ENCODE measurements at regions of chr12 and their contacts with region 1.

Region 1: GRCh38 chr12:100234598-100235304 is 32.1 kb downstream of the DEPDC4 start:
- DNase-seq: peak; percentile 29
- ATAC-seq: peak; percentile 82
- H3K4me3 ChIP-seq: no peak overlapping the region
- H3K27ac ChIP-seq: no peak overlapping the region
- H3K4me1 ChIP-seq: peaks cover 6 to 7% of the 10 kb centered on the region in 2 experiments; a peak in 3 of 4 replicates
- H3K27me3 ChIP-seq: no peaks in the 10 kb centered on the region
- CTCF ChIP-seq: peak; percentile 66 to 77 (median 73); a peak in 5 of 6 replicates
- POLR2A ChIP-seq: no peak
- RAD21 ChIP-seq: peak; percentile 80

Region 2: GRCh38 chr12:100145643-100146042 is 89.1 kb before region 1 on chr12:
- CTCF ChIA-PET with region 1: no interaction called
- POLR2A ChIA-PET with region 1: no interaction called
- RAD21 ChIA-PET with region 1: no interaction called
- intact Hi-C with region 1: no loop called
- DNase-seq: no peak
- ATAC-seq: no peak
- H3K4me3 ChIP-seq: no peak overlapping the region
- H3K27ac ChIP-seq: no peak overlapping the region
- H3K4me1 ChIP-seq: peaks cover 4 to 19% of the 10 kb centered on the region in 2 experiments; a peak in 3 of 4 replicates
- H3K27me3 ChIP-seq: no peaks in the 10 kb centered on the region
- CTCF ChIP-seq: no peak
- POLR2A ChIP-seq: no peak
- RAD21 ChIP-seq: no peak

Region 3: DNA sequence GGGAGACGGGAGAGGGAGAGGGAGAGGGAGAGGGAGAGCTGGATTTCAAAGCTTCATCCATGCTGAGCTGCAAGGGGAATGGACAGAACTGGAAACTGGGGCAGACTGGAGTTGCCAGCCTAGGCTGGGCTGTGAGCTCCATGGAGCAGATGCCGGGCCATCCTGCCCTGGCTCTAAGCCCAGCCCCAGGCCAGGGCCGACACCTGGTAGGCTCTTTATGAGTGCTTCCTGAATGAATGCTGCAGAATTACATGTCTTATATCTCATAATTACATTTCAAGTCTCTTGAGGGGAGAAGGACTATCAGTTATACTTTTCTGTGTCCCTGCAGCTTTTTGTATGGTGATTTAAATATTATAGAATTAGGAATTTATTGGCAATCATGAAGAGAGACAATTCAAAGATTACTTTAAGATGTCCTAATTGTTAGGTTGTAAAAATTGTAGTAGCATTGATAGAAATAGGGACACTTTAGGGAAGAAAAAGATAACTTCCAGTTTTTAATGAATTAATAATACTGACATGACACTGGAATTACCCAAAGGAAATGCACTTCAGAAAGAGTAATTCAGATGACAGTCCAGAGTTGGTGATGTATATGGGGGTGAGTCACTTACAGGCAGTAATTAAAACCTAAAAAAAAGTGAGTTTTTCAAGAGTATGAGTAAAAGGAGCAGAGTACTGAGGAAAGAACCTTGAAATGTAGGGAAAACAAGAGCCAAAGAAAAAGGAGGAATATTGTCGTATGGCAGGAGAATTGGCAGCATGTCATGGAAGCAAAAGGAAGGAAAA is 61.2 kb after region 1 on chr12:
- CTCF ChIA-PET with region 1: no interaction called
- POLR2A ChIA-PET with region 1: no interaction called
- RAD21 ChIA-PET with region 1: no interaction called
- intact Hi-C with region 1: no loop called
- DNase-seq: no peak
- ATAC-seq: no peak
- H3K4me3 ChIP-seq: no peak overlapping the region
- H3K27ac ChIP-seq: no peak overlapping the region
- H3K4me1 ChIP-seq: no peaks in the 10 kb centered on the region
- H3K27me3 ChIP-seq: no peaks in the 10 kb centered on the region
- CTCF ChIP-seq: no peak
- POLR2A ChIP-seq: no peak
- RAD21 ChIP-seq: no peak

Region 4: GRCh38 chr12:100348657-100349454 is 114.1 kb after region 1 on chr12:
- CTCF ChIA-PET with region 1: interaction called, 10 read pairs
- POLR2A ChIA-PET with region 1: no interaction called
- RAD21 ChIA-PET with region 1: no interaction called
- intact Hi-C with region 1: no loop called
- DNase-seq: peak; percentile 33
- ATAC-seq: peak; percentile 76
- H3K4me3 ChIP-seq: no peak overlapping the region
- H3K27ac ChIP-seq: no peak overlapping the region
- H3K4me1 ChIP-seq: no peaks in the 10 kb centered on the region
- H3K27me3 ChIP-seq: peaks cover 3% of the 10 kb centered on the region; the same call in 1 of the 2 replicates
- CTCF ChIP-seq: peak; percentile 16 to 80 (median 57); a peak in 4 of 6 replicates
- POLR2A ChIP-seq: no peak
- RAD21 ChIP-seq: peak; percentile 81

Region 5: DNA sequence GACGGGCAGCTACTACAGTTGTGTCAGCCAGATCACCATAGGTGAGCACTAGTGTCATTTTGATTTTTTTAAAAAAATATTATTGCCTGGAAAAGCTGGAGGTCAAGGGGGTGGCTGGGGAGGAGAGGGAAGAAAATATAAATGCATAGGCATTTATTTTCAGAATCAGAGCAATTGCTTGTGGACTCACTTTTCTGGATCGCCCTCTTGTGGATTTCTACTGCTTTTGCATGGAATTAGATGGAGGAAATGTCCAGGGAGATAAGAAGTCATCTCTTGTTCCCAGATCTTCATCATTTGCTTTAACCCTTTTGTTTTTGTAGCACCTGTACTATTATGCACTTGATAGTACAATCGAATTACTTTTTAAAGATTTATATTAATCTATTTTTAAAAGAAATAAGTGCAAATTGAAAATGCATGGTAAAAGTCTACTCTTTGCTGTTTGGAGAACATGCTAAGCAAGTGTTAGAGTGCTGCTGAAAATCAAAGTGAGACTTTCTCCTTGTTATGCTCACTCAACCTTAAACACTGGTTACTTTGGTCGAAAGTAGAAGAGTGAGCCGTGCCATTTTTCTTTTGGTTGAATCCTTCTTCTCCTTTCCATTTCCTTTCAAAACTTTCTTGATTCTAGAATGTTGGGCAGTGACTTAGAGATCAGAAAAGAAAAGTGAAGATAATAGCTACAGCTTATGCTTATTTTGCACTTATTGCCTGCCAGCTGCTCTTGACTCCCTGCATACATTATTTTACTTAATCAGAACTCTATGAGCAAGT is 499.3 kb after region 1 on chr12:
- CTCF ChIA-PET with region 1: interaction called, 3 read pairs
- POLR2A ChIA-PET with region 1: no interaction called
- RAD21 ChIA-PET with region 1: no interaction called
- intact Hi-C with region 1: loop called (anchors 2 kb)
- DNase-seq: peak; percentile 21
- ATAC-seq: peak; percentile 67
- H3K4me3 ChIP-seq: no peak overlapping the region
- H3K27ac ChIP-seq: no peak overlapping the region
- H3K4me1 ChIP-seq: no peaks in the 10 kb centered on the region
- H3K27me3 ChIP-seq: no peaks in the 10 kb centered on the region
- CTCF ChIP-seq: peak; percentile 57 to 62 (median 58); a peak in 5 of 6 replicates
- POLR2A ChIP-seq: no peak
- RAD21 ChIP-seq: peak; percentile 62